Activated B cell treated with CpG ODN at 0.5 μM for 24 hours (primary cell): ENCODE measurements at regions of chr6 and their contacts with region 1.

Region 1: GRCh38 chr6:109382576-109383437 is 540 bp upstream of the CD164 start:
- DNase-seq: peak; percentile 93
- ATAC-seq: peak; percentile 74
- H3K4me3 Mint-ChIP-seq: peak overlapping the region; percentile 97
- H3K27ac Mint-ChIP-seq: peak overlapping the region; percentile 99
- H3K4me1 Mint-ChIP-seq: peaks cover 40% of the 10 kb centered on the region
- H3K27me3 Mint-ChIP-seq: no peaks in the 10 kb centered on the region
- CTCF ChIP-seq: peak; percentile 80

Region 2: DNA sequence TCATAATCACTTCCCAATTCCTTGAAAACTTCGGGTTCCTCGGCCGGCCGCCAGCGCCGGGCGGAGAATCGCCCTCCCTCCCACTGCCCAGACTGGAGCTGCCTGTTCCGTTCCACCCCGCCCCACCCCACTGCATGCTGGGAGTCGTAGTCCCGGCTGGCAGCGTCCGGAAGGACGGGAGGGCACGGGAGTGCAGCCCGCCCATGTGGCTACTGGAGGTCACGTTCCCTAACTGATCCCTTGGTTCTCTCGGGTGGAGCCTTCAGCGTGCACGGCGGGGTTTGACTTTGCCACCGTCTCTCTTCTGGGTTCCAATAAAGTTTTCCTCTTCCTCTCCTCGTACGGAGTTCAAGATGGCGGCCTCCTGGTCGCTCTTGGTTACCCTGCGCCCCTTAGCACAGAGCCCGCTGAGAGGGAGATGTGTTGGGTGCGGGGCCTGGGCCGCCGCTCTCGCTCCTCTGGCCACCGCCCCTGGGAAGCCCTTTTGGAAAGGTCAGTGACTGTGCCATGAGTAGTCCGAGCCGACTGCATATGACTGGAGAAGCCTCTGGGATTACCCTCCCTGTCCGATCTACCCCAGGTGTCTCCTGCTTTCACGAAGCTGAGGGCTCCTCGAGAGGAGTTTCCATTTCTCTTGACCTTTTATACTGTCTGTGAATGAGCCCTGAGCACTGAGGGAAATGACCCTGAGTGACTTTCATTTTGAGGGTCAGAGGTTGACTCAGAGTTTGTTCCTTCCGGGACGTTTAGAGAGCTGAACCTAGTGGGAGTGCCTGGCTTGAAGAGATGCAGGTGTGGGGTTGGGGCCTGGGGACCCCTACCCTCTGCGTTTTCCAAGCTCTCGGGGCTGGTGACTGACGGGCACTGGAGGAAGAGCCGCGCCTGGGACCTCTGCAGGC is 1087.8 kb before region 1 on chr6 and contains the start of gene AFG1L:
- CTCF ChIA-PET with region 1: no interaction called
- POLR2A ChIA-PET with region 1: interaction called, 4 read pairs
- intact Hi-C with region 1: loop called (anchors 10 kb)
- DNase-seq: peak; percentile 89
- ATAC-seq: peak; percentile 92
- H3K4me3 Mint-ChIP-seq: peak within 1 kb of the TSS; percentile 99
- H3K27ac Mint-ChIP-seq: peak within 1 kb of the TSS; percentile 100
- H3K4me1 Mint-ChIP-seq: peaks cover 30% of the 10 kb centered on the region
- H3K27me3 Mint-ChIP-seq: no peaks in the 10 kb centered on the region
- CTCF ChIP-seq: no peak
- total RNA-seq, gene AFG1L: 7.5 and 10.3 TPM in 2 replicates

Region 3: DNA sequence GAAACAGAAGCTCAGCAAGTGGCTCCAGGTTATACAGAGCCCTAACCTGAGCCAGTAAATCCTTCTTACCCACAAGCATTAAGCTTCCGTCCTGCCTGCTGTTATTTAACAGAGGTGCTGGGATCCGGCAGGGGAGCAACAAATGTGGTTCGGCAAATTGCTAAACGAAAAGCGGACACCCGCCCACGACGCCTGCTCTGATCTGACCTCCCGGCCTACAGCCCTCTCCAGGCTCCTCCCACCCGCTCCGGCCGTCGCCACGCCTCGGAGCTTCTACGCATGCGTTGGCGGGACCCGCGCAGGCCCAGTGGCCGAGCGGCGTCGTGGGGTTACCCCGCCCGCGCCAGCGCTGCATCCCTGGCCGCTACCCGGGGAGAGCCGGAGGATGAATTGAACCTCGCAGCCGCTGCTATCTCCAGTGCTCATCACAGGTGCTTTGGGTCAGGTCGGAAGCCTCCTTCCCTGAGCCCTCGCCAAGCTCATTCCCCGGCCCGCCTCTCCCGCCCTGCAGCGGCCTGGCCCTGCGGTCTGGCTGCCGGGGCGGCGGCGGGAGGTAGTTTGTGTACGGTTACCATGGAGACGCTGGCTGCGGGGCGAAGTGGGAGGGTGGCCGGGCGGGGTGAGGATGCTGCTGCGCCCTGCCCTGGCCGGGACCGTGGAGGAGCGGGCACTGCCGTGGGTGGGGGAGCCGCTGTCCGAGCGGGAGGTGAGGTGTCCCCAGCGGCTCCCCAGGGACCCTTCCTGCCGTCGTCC is 534.5 kb before region 1 on chr6 and contains the start of gene ARMC2:
- CTCF ChIA-PET with region 1: no interaction called
- POLR2A ChIA-PET with region 1: no interaction called
- intact Hi-C with region 1: loop called (anchors 1 kb)
- DNase-seq: peak; percentile 98
- ATAC-seq: peak; percentile 94
- H3K4me3 Mint-ChIP-seq: peak within 1 kb of the TSS; percentile 86
- H3K27ac Mint-ChIP-seq: peak within 1 kb of the TSS; percentile 83
- H3K4me1 Mint-ChIP-seq: peaks cover 14% of the 10 kb centered on the region
- H3K27me3 Mint-ChIP-seq: peaks cover under 1% of the 10 kb centered on the region
- CTCF ChIP-seq: no peak
- total RNA-seq, gene ARMC2: 3.5 and 4.3 TPM in 2 replicates

Region 4: GRCh38 chr6:109187399-109188114 is 195.2 kb before region 1 on chr6:
- CTCF ChIA-PET with region 1: interaction called, 118 read pairs
- POLR2A ChIA-PET with region 1: interaction called, 40 read pairs
- intact Hi-C with region 1: loop called (anchors 1 kb)
- DNase-seq: peak; percentile 37
- ATAC-seq: peak; percentile 81
- H3K4me3 Mint-ChIP-seq: no peak overlapping the region
- H3K27ac Mint-ChIP-seq: no peak overlapping the region
- H3K4me1 Mint-ChIP-seq: peaks cover 9% of the 10 kb centered on the region
- H3K27me3 Mint-ChIP-seq: peaks cover 3% of the 10 kb centered on the region
- CTCF ChIP-seq: peak; percentile 41

Region 5: GRCh38 chr6:109482905-109483735 is 100.3 kb after region 1 on chr6 and contains the start of gene ZBTB24:
- CTCF ChIA-PET with region 1: interaction called, 6 read pairs
- POLR2A ChIA-PET with region 1: interaction called, 16 read pairs
- intact Hi-C with region 1: loop called (anchors 1 kb)
- DNase-seq: peak; percentile 81
- ATAC-seq: peak; percentile 82
- H3K4me3 Mint-ChIP-seq: peak within 1 kb of the TSS; percentile 95
- H3K27ac Mint-ChIP-seq: peak within 1 kb of the TSS; percentile 85
- H3K4me1 Mint-ChIP-seq: peaks cover 52% of the 10 kb centered on the region
- H3K27me3 Mint-ChIP-seq: no peaks in the 10 kb centered on the region
- CTCF ChIP-seq: no peak
- total RNA-seq, gene ZBTB24: 22.8 and 25.4 TPM in 2 replicates

Region 6: GRCh38 chr6:110873981-110874879 is 1491.4 kb after region 1 on chr6 and contains the start of gene AMD1:
- CTCF ChIA-PET with region 1: no interaction called
- POLR2A ChIA-PET with region 1: interaction called, 5 read pairs
- intact Hi-C with region 1: loop called (anchors 10 kb)
- DNase-seq: peak; percentile 84
- ATAC-seq: peak; percentile 76
- H3K4me3 Mint-ChIP-seq: peak within 1 kb of the TSS; percentile 99
- H3K27ac Mint-ChIP-seq: peak within 1 kb of the TSS; percentile 99
- H3K4me1 Mint-ChIP-seq: peaks cover 43% of the 10 kb centered on the region
- H3K27me3 Mint-ChIP-seq: no peaks in the 10 kb centered on the region
- CTCF ChIP-seq: no peak
- total RNA-seq, gene AMD1: 61.7 and 65.5 TPM in 2 replicates